GM12878 (cell line): ENCODE measurements at regions of chr6 and their contacts with region 1.

Region 1: DNA sequence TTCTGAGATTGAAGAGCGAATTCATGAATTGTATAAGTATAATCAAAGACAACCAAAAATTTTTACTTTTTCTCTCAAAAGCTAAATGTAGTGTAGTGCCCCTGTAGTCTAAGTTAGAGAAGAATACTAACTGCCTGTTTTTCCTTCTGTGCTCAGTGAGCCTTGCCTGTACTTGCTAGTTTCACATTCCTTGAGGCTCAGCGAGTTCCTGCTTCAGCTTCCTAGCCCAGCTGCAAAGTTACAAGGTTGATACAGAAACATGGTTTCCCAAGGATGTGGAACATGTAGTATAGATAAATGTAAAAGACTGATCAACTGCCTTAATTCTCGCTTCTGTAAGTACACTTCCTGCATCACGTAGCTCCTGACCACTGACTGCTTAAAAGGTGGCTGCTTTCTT is 33.1 kb upstream of the SEC63 start:
- DNase-seq: no peak
- ATAC-seq: no peak
- H3K4me3 ChIP-seq: peak overlapping the region; percentile 20; the same call in 1 of the 2 replicates
- H3K27ac ChIP-seq: no peak overlapping the region
- H3K4me1 ChIP-seq: no peaks in the 10 kb centered on the region
- H3K27me3 ChIP-seq: no peaks in the 10 kb centered on the region; a peak in 1 of 4 replicates
- CTCF ChIP-seq: no peak
- EP300 ChIP-seq: no peak
- POLR2A ChIP-seq: no peak
- RAD21 ChIP-seq: no peak

Region 2: DNA sequence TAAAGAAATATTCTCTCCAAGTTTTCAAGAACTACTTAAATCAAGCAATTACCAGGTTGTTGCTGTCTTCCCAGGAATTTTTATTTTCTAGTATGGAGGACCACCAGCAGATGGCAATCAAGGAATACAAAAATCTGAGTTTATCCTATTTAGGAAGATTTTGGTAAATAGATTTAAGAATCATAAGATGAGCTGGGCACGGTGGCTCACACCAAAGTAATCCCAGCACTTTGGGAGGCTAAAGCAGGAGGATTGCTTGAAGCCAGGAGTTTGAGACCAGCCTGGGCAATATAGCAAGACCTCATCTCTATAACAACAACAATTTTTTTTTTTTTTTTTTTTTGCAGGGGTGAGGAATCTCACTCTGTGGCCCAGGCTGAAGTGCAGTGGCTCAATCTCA is 13.8 kb before region 1 on chr6:
- CTCF ChIA-PET with region 1: interaction called, 10 read pairs
- POLR2A ChIA-PET with region 1: no interaction called
- RAD21 ChIA-PET with region 1: no interaction called
- SMC1A ChIA-PET with region 1: interaction called, 5 read pairs
- in situ Hi-C with region 1: no loop called
- intact Hi-C with region 1: no loop called
- DNase-seq: no peak
- ATAC-seq: no peak
- H3K4me3 ChIP-seq: no peak overlapping the region
- H3K27ac ChIP-seq: no peak overlapping the region
- H3K4me1 ChIP-seq: no peaks in the 10 kb centered on the region
- H3K27me3 ChIP-seq: no peaks in the 10 kb centered on the region; a peak in 1 of 4 replicates
- CTCF ChIP-seq: peak in 1 of 3 experiments; percentile 38; a peak in 2 of 6 replicates
- EP300 ChIP-seq: no peak
- POLR2A ChIP-seq: no peak
- RAD21 ChIP-seq: peak; percentile 35